Endothelial cell of umbilical vein (primary cell): ENCODE measurements at regions of chr7 and their contacts with region 1.

Region 1: GRCh38 chr7:20229646-20230500 is 12.7 kb upstream of the MACC1 start:
- DNase-seq: peak; percentile 95
- H3K4me3 ChIP-seq: no peak overlapping the region
- H3K27ac ChIP-seq: peak overlapping the region; percentile 99
- H3K4me1 ChIP-seq: peaks cover 20% of the 10 kb centered on the region
- H3K27me3 ChIP-seq: no peaks in the 10 kb centered on the region
- CTCF ChIP-seq: no peak
- POLR2A ChIP-seq: no peak

Region 2: GRCh38 chr7:19958309-19958896 is 271.5 kb before region 1 on chr7:
- CTCF ChIA-PET with region 1: no interaction called
- POLR2A ChIA-PET with region 1: no interaction called
- dilution Hi-C with region 1: no loop called
- intact Hi-C with region 1: loop called (anchors 1 kb)
- DNase-seq: peak; percentile 80
- H3K4me3 ChIP-seq: no peak overlapping the region
- H3K27ac ChIP-seq: peak overlapping the region; percentile 83
- H3K4me1 ChIP-seq: peaks cover 17% of the 10 kb centered on the region
- H3K27me3 ChIP-seq: no peaks in the 10 kb centered on the region
- CTCF ChIP-seq: no peak
- POLR2A ChIP-seq: no peak

Region 3: GRCh38 chr7:20172736-20173334 is 57.0 kb before region 1 on chr7:
- CTCF ChIA-PET with region 1: no interaction called
- POLR2A ChIA-PET with region 1: no interaction called
- dilution Hi-C with region 1: no loop called
- intact Hi-C with region 1: no loop called
- DNase-seq: peak; percentile 51
- H3K4me3 ChIP-seq: no peak overlapping the region
- H3K27ac ChIP-seq: no peak overlapping the region
- H3K4me1 ChIP-seq: no peaks in the 10 kb centered on the region
- H3K27me3 ChIP-seq: no peaks in the 10 kb centered on the region
- CTCF ChIP-seq: peak; percentile 55 to 66
- POLR2A ChIP-seq: no peak

Region 4: DNA sequence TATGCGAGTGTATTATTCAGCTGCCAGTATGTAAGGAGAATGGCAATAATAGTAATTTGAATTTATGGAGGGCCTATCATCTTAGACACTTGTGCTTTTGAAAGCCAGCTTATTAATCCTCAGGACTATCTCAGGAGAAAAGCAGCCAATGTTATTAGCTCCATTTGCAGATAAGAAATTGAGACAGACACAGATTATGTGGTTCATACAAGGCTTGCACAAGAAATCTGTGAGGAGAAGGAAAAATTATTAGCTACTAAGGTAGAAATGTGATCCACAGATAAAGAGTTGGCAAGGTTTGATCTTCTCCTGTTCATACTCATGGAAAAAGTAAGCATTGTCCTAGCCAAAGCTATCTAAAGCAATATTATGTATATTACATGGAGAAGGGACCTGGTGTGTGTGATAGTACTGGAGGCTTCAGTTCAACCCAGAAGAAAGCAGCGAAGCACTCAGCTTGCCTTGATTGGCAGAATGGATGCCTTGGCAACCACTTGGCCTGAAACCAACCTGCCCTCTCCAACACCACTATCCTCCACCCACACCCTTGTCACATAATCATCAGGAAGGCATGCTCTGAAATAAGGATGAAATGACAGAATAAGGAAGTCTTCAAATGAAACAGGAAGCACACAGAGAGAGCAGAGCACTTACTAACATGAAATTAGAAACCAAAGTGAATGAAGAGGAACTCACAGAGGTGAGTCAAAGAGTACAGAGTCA is 30.7 kb before region 1 on chr7:
- CTCF ChIA-PET with region 1: interaction called, 4 read pairs
- POLR2A ChIA-PET with region 1: no interaction called
- dilution Hi-C with region 1: no loop called
- intact Hi-C with region 1: loop called (anchors 1 kb)
- DNase-seq: peak; percentile 83
- H3K4me3 ChIP-seq: no peak overlapping the region
- H3K27ac ChIP-seq: no peak overlapping the region
- H3K4me1 ChIP-seq: peaks cover 11% of the 10 kb centered on the region
- H3K27me3 ChIP-seq: no peaks in the 10 kb centered on the region
- CTCF ChIP-seq: no peak
- POLR2A ChIP-seq: no peak

Region 5: GRCh38 chr7:20219446-20220292 is 10.2 kb before region 1 on chr7:
- CTCF ChIA-PET with region 1: interaction called, 10 read pairs
- POLR2A ChIA-PET with region 1: no interaction called
- dilution Hi-C with region 1: no loop called
- intact Hi-C with region 1: loop called (anchors 1 kb)
- DNase-seq: peak; percentile 95
- H3K4me3 ChIP-seq: no peak overlapping the region
- H3K27ac ChIP-seq: peak overlapping the region; percentile 83
- H3K4me1 ChIP-seq: peaks cover 21% of the 10 kb centered on the region
- H3K27me3 ChIP-seq: no peaks in the 10 kb centered on the region
- CTCF ChIP-seq: no peak
- POLR2A ChIP-seq: peak; percentile 78

Region 6: DNA sequence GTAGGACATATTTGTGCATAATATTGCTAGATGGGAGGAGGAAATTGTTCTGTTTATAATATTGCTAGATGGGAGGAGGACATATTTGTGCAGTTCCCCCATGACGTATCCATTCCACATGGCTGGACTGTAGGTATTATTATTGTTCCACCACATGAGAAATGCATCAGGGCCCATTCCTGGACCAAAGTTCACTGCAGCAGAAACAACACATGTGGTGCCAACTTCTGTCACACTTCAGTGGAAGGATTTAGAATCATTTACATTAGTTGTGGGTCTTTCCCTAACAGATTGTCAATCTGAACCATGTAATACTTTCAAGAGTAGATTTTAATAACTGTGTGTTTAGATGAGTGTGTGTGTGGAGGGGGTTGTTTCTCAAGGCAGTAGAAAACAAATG is 20.0 kb after region 1 on chr7:
- CTCF ChIA-PET with region 1: no interaction called
- POLR2A ChIA-PET with region 1: no interaction called
- dilution Hi-C with region 1: no loop called
- intact Hi-C with region 1: no loop called
- DNase-seq: no peak
- H3K4me3 ChIP-seq: no peak overlapping the region
- H3K27ac ChIP-seq: no peak overlapping the region
- H3K4me1 ChIP-seq: no peaks in the 10 kb centered on the region
- H3K27me3 ChIP-seq: no peaks in the 10 kb centered on the region
- CTCF ChIP-seq: no peak
- POLR2A ChIP-seq: no peak

Region 7: GRCh38 chr7:20642166-20642565 is 412.3 kb after region 1 on chr7:
- CTCF ChIA-PET with region 1: no interaction called
- POLR2A ChIA-PET with region 1: no interaction called
- dilution Hi-C with region 1: no loop called
- intact Hi-C with region 1: loop called (anchors 1 kb)
- DNase-seq: peak; percentile 73
- H3K4me3 ChIP-seq: no peak overlapping the region
- H3K27ac ChIP-seq: no peak overlapping the region
- H3K4me1 ChIP-seq: peaks cover 6% of the 10 kb centered on the region
- H3K27me3 ChIP-seq: no peaks in the 10 kb centered on the region
- CTCF ChIP-seq: no peak
- POLR2A ChIP-seq: no peak